HepG2 (cell line): ENCODE measurements at regions of chrX and their contacts with region 1.

Region 1: DNA sequence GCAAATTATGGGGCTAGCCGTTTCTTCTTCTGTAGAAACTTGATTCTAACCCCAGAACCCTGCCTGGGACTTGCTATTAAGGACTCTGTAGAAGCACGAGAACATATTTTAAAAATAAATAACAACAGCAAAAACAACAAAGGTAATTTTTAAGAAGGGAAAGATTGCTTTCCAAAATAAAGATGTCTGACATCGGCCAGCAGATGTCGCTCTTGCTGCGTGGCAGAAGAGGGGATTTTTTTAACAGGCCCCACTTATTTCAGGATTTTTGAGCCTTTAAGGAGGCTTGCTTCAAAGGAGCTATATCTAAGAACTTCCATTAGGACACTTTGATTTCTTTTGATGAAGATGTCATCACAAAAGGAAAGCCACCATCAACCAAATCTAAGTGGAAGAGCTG is 62.8 kb upstream of the EGFL6 start:
- DNase-seq: peak; percentile 2
- ATAC-seq: no peak
- H3K4me3 ChIP-seq: no peak overlapping the region
- H3K27ac ChIP-seq: no peak overlapping the region
- H3K4me1 ChIP-seq: no peaks in the 10 kb centered on the region
- H3K27me3 ChIP-seq: no peaks in the 10 kb centered on the region
- CTCF ChIP-seq: peak; percentile 56
- EP300 ChIP-seq: no peak
- POLR2A ChIP-seq: no peak
- RAD21 ChIP-seq: no peak; the same call in 1 of the 2 replicates

Region 2: DNA sequence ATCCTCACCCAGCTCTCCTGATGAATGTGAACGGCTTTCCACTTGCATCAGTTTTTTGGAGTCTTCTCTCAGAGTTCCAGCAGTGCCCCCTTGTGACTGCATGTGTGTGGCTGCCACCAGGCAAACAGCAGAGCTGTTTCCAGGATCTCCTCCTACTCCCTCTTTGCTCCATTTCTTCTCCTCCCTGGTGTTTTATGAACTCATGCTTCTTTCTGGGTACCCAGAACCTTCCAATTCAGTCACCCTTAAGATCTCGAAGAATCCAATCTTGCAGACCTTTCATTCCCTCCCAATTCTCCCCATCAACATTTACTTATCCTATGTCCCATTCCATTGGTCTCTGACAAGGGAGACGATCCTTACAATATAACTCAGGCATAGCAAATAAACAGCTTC is 139.6 kb after region 1 on chrX:
- CTCF ChIA-PET with region 1: interaction called, 7 read pairs
- POLR2A ChIA-PET with region 1: no interaction called
- in situ Hi-C with region 1: loop called (anchors 10 kb)
- intact Hi-C with region 1: loop called (anchors 1 kb)
- DNase-seq: peak; percentile 30
- ATAC-seq: peak; percentile 79
- H3K4me3 ChIP-seq: no peak overlapping the region
- H3K27ac ChIP-seq: no peak overlapping the region
- H3K4me1 ChIP-seq: no peaks in the 10 kb centered on the region
- H3K27me3 ChIP-seq: no peaks in the 10 kb centered on the region
- CTCF ChIP-seq: peak; percentile 63
- EP300 ChIP-seq: no peak
- POLR2A ChIP-seq: no peak
- RAD21 ChIP-seq: 0 out of 2 replicates have a peak, but pooled peaks have one; percentile 23

Region 3: DNA sequence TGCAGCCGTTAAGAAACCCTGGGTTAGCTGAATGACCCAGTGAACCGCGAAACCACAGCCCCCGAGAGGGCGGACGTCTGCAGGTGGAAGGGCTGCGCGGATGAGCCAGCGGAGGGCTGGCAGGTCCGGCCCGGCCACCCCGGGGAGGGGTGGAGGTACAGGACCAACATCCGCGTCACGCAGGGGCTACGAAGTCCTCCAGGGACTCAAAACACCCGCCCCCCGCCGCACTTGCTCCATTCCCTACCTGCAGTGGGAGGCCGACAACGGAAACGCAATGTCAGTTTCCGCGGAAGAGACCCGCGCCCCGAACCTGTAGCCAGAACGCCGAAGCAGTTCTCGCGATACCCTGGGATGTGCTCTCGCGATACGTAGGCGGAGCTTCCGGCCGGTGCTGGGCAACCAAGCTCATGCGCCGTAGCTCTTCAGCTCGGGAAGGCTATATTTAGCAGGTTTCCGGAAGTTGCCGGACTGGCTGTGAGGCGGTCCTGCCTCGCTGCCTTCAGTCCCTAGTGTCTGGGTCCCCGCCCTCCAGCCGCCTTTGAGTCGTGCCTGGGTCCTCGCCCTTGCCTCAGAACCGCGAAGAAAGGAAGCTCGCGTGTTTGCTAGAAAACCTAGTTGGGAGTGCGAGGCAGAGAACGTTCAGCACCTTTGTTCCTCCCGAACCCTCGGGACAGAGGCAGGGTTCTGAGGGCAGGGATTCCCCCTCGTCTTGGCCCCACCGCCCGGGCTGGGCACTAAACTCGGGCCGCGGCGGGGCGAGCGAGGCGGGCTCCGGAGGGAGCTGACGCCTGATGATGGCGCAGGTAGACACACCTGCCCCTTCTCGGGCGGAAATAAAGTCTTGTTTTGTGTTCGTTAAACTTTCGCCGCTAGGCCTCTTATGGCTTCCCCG is 228.0 kb after region 1 on chrX and contains the starts of genes OFD1 and TRAPPC2:
- CTCF ChIA-PET with region 1: no interaction called
- POLR2A ChIA-PET with region 1: no interaction called
- in situ Hi-C with region 1: no loop called
- intact Hi-C with region 1: loop called (anchors 10 kb)
- DNase-seq: peak; percentile 88
- ATAC-seq: peak; percentile 99
- H3K4me3 ChIP-seq: peak within 1 kb of the TSS; percentile 72 to 79 (median 79)
- H3K27ac ChIP-seq: peak within 1 kb of the TSS; percentile 88
- H3K4me1 ChIP-seq: peaks cover 15% of the 10 kb centered on the region
- H3K27me3 ChIP-seq: no peaks in the 10 kb centered on the region; a peak in 1 of 5 replicates
- CTCF ChIP-seq: 0 out of 2 replicates have a peak, but pooled peaks have one; percentile 17
- EP300 ChIP-seq: no peak; a peak in 1 of 4 replicates
- POLR2A ChIP-seq: peak; percentile 77 to 89
- RAD21 ChIP-seq: no peak
- total RNA-seq, gene OFD1: 14.3 and 16.4 TPM in 2 replicates
- total RNA-seq, gene TRAPPC2: 8.1 and 9.2 TPM in 2 replicates

Region 4: GRCh38 chrX:13750204-13750603 is 243.6 kb after region 1 on chrX:
- CTCF ChIA-PET with region 1: no interaction called
- POLR2A ChIA-PET with region 1: no interaction called
- in situ Hi-C with region 1: loop called (anchors 25 kb)
- intact Hi-C with region 1: loop called (anchors 1 kb)
- DNase-seq: peak; percentile 16
- ATAC-seq: peak; percentile 62
- H3K4me3 ChIP-seq: no peak overlapping the region
- H3K27ac ChIP-seq: no peak overlapping the region
- H3K4me1 ChIP-seq: no peaks in the 10 kb centered on the region
- H3K27me3 ChIP-seq: no peaks in the 10 kb centered on the region
- CTCF ChIP-seq: peak; percentile 52
- EP300 ChIP-seq: no peak
- POLR2A ChIP-seq: no peak
- RAD21 ChIP-seq: no peak